Naive thymus-derived CD4-positive, alpha-beta T cell (primary cell): ENCODE measurements at regions of chr14 and their contacts with region 1.

Region 1: GRCh38 chr14:73458151-73458976 is at the start of gene NUMB:
- DNase-seq: peak; percentile 70 to 99 (median 98)
- ATAC-seq: peak; percentile 99
- H3K4me3 ChIP-seq: peak within 1 kb of the TSS; percentile 71
- H3K4me3 Mint-ChIP-seq: peak within 1 kb of the TSS; percentile 87 to 100 (median 98)
- H3K27ac ChIP-seq: peak within 1 kb of the TSS; percentile 82
- H3K27ac Mint-ChIP-seq: peak within 1 kb of the TSS; percentile 80 to 98 (median 94)
- H3K4me1 ChIP-seq: peaks cover 0 to 9% of the 10 kb centered on the region in 2 donors
- H3K4me1 Mint-ChIP-seq: peaks cover 32 to 48% (median 45%) of the 10 kb centered on the region in 7 donors
- H3K27me3 ChIP-seq: no peaks in the 10 kb centered on the region
- H3K27me3 Mint-ChIP-seq: no peaks in the 10 kb centered on the region
- total RNA-seq, gene NUMB: 48.9 to 90.6 (median 49.4) TPM

Region 2: DNA sequence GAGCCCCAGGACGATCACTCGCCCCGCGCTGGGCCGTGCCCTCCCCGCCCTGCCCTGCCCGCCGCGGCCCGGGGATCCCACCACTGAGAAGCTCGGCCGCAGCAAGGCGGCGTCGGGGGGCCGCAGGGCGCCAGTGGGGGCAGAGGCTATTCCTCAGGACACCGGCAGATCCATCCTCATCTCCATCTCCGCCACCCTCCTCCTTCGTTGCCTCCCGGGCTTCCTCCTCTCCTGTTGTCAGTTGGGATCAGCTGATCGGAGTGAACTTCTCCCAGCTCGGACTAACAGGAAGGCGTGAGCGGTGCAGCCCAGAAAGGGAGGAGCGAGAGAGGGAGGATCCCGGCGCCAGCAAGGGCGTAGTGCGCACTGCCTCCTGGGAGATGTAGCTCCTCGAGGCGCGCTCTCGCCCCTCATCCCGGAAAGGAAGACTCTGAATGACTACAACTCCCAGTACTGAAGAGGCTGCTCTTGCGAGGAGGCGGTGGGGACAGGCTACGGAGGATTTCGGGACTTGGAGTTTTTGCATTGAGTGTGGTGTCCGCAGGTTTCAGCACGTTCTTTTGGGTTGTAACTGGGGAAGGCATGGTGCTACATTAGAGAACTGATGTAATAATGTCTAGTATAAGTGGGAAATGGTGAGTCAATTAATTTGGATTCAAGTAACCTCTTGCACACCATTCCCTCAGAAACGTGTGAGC is 431.4 kb before region 1 on chr14 and contains the start of gene ZFYVE1:
- CTCF ChIA-PET with region 1: no interaction called
- POLR2A ChIA-PET with region 1: no interaction called
- intact Hi-C with region 1: loop called (anchors 1 to 2 kb)
- DNase-seq: peak; percentile 65 to 91 (median 86)
- ATAC-seq: peak; percentile 100
- H3K4me3 ChIP-seq: peak within 1 kb of the TSS; percentile 74
- H3K4me3 Mint-ChIP-seq: peak within 1 kb of the TSS; percentile 80 to 99 (median 96)
- H3K27ac ChIP-seq: peak within 1 kb of the TSS; percentile 74
- H3K27ac Mint-ChIP-seq: peak within 1 kb of the TSS; percentile 71 to 96 (median 83)
- H3K4me1 ChIP-seq: peaks cover 11 to 12% of the 10 kb centered on the region in 2 donors
- H3K4me1 Mint-ChIP-seq: peaks cover 33 to 50% (median 45%) of the 10 kb centered on the region in 7 donors
- H3K27me3 ChIP-seq: no peaks in the 10 kb centered on the region
- H3K27me3 Mint-ChIP-seq: no peaks in the 10 kb centered on the region
- total RNA-seq, gene ZFYVE1: 15.3 to 24.8 (median 19.1) TPM

Region 3: GRCh38 chr14:73136387-73137225 is 321.8 kb before region 1 on chr14 and contains the start of gene PSEN1:
- CTCF ChIA-PET with region 1: no interaction called
- POLR2A ChIA-PET with region 1: interaction called, 5 read pairs
- intact Hi-C with region 1: loop called (anchors 1 to 2 kb)
- DNase-seq: peak; percentile 97 to 100 (median 98)
- ATAC-seq: peak; percentile 96
- H3K4me3 ChIP-seq: peak within 1 kb of the TSS; percentile 93
- H3K4me3 Mint-ChIP-seq: peak within 1 kb of the TSS; percentile 82 to 99 (median 91)
- H3K27ac ChIP-seq: peak within 1 kb of the TSS; percentile 98
- H3K27ac Mint-ChIP-seq: peak within 1 kb of the TSS; percentile 71 to 99 (median 96)
- H3K4me1 ChIP-seq: peaks cover 7 to 17% of the 10 kb centered on the region in 2 donors
- H3K4me1 Mint-ChIP-seq: peaks cover 17 to 39% (median 36%) of the 10 kb centered on the region in 7 donors
- H3K27me3 ChIP-seq: no peaks in the 10 kb centered on the region
- H3K27me3 Mint-ChIP-seq: no peaks in the 10 kb centered on the region
- total RNA-seq, gene PSEN1: 32.7 to 55.8 (median 49.3) TPM

Region 4: DNA sequence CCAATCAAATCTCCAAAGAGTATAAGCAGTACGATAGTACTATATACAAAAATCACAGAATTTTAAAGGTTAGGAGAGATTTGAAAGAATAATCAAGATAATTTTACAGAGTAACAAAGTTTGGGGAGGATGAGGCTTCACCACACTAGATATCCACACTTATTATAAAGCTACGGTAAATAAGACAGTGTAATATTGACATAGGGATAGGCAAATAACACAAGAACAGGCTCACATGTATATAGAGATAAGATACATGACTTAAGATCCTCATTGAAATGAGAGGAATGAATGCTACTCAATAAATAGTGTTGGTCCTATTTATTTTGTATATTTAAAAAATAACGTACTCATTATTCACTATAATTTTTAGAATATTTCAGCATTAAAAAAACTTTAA is 26.2 kb before region 1 on chr14:
- CTCF ChIA-PET with region 1: no interaction called
- POLR2A ChIA-PET with region 1: no interaction called
- intact Hi-C with region 1: no loop called
- DNase-seq: no peak
- ATAC-seq: no peak
- H3K4me3 ChIP-seq: no peak overlapping the region
- H3K4me3 Mint-ChIP-seq: no peak overlapping the region
- H3K27ac ChIP-seq: no peak overlapping the region
- H3K27ac Mint-ChIP-seq: no peak overlapping the region
- H3K4me1 ChIP-seq: no peaks in the 10 kb centered on the region
- H3K4me1 Mint-ChIP-seq: peaks cover 0 to 37% (median 23%) of the 10 kb centered on the region in 7 donors
- H3K27me3 ChIP-seq: no peaks in the 10 kb centered on the region
- H3K27me3 Mint-ChIP-seq: no peaks in the 10 kb centered on the region

Region 5: DNA sequence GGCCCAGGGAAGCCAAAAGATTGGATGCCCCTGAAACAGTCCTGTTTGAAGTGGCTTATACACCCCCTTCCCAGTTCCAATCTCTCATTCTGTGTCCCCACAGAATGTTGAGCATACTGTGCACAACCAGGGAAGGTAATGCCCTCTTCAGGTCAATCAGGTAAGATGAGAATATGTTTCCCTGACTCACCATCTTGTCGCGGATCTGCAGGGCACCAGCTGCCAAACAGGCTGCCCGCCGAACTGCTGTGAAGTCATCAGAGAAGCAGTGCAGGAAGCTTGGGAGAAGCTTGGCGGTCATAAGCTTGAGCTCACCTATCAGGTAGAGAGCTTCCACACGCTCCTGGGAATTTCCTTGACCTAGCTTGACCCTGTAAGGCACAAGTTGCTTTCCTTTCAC is 42.0 kb after region 1 on chr14:
- CTCF ChIA-PET with region 1: no interaction called
- POLR2A ChIA-PET with region 1: no interaction called
- intact Hi-C with region 1: no loop called
- DNase-seq: no peak
- ATAC-seq: no peak
- H3K4me3 ChIP-seq: no peak overlapping the region
- H3K4me3 Mint-ChIP-seq: no peak overlapping the region
- H3K27ac ChIP-seq: no peak overlapping the region
- H3K27ac Mint-ChIP-seq: no peak overlapping the region
- H3K4me1 ChIP-seq: no peaks in the 10 kb centered on the region
- H3K4me1 Mint-ChIP-seq: peaks cover 0 to 17% (median 16%) of the 10 kb centered on the region in 7 donors
- H3K27me3 ChIP-seq: no peaks in the 10 kb centered on the region
- H3K27me3 Mint-ChIP-seq: no peaks in the 10 kb centered on the region

Region 6: DNA sequence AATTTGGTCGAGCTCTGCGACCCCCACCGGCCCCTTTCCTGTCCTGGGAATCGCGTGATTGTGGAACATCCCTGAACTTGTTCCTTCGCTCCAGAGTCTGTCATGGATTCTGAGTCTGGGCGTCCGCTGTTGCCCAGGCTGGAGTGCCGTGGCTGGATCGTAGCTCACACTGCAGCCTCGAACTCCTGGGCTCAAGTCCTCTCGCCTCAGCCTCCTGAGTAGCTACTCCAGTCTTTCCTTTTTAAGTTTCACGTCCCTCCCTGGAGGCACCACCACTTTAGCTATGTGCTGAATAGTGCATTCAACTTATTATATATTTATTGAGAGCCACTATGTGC is 154.7 kb after region 1 on chr14:
- CTCF ChIA-PET with region 1: no interaction called
- POLR2A ChIA-PET with region 1: interaction called, 3 read pairs
- intact Hi-C with region 1: loop called in 1 of 2 experiments (anchors 1 kb)
- DNase-seq: no peak
- ATAC-seq: no peak
- H3K4me3 ChIP-seq: peak overlapping the region; percentile 73
- H3K4me3 Mint-ChIP-seq: peak overlapping the region; percentile 82 to 90 (median 88)
- H3K27ac ChIP-seq: peak overlapping the region; percentile 65
- H3K27ac Mint-ChIP-seq: peak overlapping the region; percentile 72 to 90 (median 84)
- H3K4me1 ChIP-seq: no peaks in the 10 kb centered on the region
- H3K4me1 Mint-ChIP-seq: peaks cover 0 to 14% (median 0%) of the 10 kb centered on the region in 7 donors
- H3K27me3 ChIP-seq: no peaks in the 10 kb centered on the region
- H3K27me3 Mint-ChIP-seq: peaks cover 0 to 10% (median 0%) of the 10 kb centered on the region in 5 donors

Region 7: DNA sequence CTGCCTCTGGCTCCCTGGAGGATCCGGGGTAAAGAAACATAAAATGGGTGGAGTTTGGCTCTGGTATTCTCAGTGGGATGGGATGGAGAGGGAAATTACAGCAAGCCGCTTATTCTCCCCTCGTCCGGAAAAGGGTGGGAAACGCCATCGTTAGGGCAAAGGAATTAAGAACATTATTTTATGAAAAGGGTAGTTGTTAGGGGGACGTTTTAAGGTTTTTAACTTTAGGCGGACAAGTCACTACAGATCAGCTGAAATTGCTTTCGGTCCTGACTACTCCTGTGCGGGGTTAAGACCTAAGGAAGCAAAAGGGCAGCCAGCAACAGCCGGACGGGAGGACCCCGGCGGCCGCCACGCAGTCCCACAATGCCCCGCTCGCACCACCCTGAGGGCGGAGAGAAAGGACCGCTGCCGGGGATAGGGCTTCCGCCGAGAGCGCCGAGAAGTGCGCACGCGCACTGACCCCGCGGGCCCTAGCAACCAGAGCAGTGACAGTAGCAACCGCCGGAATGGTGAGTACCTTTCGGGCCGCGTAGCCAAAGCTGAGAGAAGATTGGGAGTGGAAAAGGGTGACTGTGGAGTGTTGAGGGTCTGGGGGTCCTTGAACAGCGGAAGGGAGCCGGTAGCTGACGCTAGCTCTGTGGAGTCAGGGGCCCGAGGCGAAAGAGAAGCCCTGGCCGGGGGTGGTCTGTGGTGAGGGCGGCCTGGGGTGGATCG is 186.3 kb after region 1 on chr14 and contains the start of gene DNAL1:
- CTCF ChIA-PET with region 1: no interaction called
- POLR2A ChIA-PET with region 1: interaction called, 3 read pairs
- intact Hi-C with region 1: loop called in 1 of 2 experiments (anchors 1 kb)
- DNase-seq: peak; percentile 80 to 93 (median 86)
- ATAC-seq: peak; percentile 99
- H3K4me3 ChIP-seq: peak within 1 kb of the TSS; percentile 92
- H3K4me3 Mint-ChIP-seq: peak within 1 kb of the TSS; percentile 89 to 99 (median 94)
- H3K27ac ChIP-seq: peak within 1 kb of the TSS; percentile 80
- H3K27ac Mint-ChIP-seq: peak within 1 kb of the TSS; percentile 86 to 98 (median 93)
- H3K4me1 ChIP-seq: peaks cover 7 to 9% of the 10 kb centered on the region in 2 donors
- H3K4me1 Mint-ChIP-seq: peaks cover 8 to 20% (median 16%) of the 10 kb centered on the region in 7 donors
- H3K27me3 ChIP-seq: no peaks in the 10 kb centered on the region
- H3K27me3 Mint-ChIP-seq: no peaks in the 10 kb centered on the region
- total RNA-seq, gene DNAL1: 3.6 to 8.4 (median 6.5) TPM

Region 8: DNA sequence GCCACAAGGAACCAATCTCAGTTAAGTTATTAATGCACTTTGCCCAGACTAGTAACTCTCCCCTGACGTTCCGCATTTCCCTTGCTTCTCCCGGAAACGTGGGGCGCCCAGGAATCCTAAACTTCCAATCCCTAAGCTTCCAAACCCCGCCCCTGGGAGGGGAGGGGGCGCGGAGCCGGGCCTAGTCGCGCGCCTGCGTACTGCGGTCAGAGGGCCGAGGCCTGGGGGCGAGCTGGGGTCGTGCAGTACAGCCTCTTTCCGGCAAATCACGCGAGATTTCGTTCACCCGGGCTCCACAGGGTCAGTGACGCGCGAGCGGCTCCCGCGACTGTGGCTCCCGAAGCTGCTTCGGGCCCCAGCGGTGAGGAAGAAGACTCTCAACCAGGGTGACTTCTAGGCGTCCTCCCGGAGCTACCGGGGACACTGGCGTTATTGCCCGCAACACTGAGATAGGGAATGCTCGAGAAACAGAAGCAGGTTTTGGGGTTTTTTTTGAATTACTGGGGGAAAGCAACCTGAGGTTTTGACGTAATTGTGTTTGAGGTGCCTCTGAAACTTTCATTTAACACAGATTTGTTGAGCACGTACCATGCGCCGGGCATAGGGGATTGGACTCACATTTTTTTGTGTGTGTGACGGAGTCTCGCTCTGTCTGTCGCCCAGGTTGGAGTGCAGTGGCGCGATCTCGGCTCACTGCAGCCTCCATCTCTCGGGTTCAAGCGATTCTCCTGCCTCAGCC is 393.4 kb after region 1 on chr14 and contains the start of gene PTGR2:
- CTCF ChIA-PET with region 1: no interaction called
- POLR2A ChIA-PET with region 1: no interaction called
- intact Hi-C with region 1: loop called in 1 of 2 experiments (anchors 1 kb)
- DNase-seq: peak; percentile 79 to 92 (median 86)
- ATAC-seq: peak; percentile 98
- H3K4me3 ChIP-seq: peak within 1 kb of the TSS; percentile 76
- H3K4me3 Mint-ChIP-seq: peak within 1 kb of the TSS; percentile 88 to 99 (median 96)
- H3K27ac ChIP-seq: peak within 1 kb of the TSS; percentile 85
- H3K27ac Mint-ChIP-seq: peak within 1 kb of the TSS; percentile 92 to 99 (median 97)
- H3K4me1 ChIP-seq: peaks cover 8 to 9% of the 10 kb centered on the region in 2 donors
- H3K4me1 Mint-ChIP-seq: peaks cover 3 to 28% (median 21%) of the 10 kb centered on the region in 7 donors
- H3K27me3 ChIP-seq: no peaks in the 10 kb centered on the region
- H3K27me3 Mint-ChIP-seq: no peaks in the 10 kb centered on the region
- total RNA-seq, gene PTGR2: 1.2 to 7.9 (median 1.8) TPM

Region 9: GRCh38 chr14:73991092-73991491 is 532.7 kb after region 1 on chr14:
- CTCF ChIA-PET with region 1: no interaction called
- POLR2A ChIA-PET with region 1: no interaction called
- intact Hi-C with region 1: no loop called
- DNase-seq: no peak
- ATAC-seq: no peak
- H3K4me3 ChIP-seq: no peak overlapping the region
- H3K4me3 Mint-ChIP-seq: no peak overlapping the region
- H3K27ac ChIP-seq: no peak overlapping the region
- H3K27ac Mint-ChIP-seq: no peak overlapping the region
- H3K4me1 ChIP-seq: no peaks in the 10 kb centered on the region
- H3K4me1 Mint-ChIP-seq: peaks cover 0 to 6% (median 0%) of the 10 kb centered on the region in 7 donors
- H3K27me3 ChIP-seq: no peaks in the 10 kb centered on the region
- H3K27me3 Mint-ChIP-seq: no peaks in the 10 kb centered on the region